ENCODE measurements at regions of chr6 and their contacts with region 1.

Region 1: DNA sequence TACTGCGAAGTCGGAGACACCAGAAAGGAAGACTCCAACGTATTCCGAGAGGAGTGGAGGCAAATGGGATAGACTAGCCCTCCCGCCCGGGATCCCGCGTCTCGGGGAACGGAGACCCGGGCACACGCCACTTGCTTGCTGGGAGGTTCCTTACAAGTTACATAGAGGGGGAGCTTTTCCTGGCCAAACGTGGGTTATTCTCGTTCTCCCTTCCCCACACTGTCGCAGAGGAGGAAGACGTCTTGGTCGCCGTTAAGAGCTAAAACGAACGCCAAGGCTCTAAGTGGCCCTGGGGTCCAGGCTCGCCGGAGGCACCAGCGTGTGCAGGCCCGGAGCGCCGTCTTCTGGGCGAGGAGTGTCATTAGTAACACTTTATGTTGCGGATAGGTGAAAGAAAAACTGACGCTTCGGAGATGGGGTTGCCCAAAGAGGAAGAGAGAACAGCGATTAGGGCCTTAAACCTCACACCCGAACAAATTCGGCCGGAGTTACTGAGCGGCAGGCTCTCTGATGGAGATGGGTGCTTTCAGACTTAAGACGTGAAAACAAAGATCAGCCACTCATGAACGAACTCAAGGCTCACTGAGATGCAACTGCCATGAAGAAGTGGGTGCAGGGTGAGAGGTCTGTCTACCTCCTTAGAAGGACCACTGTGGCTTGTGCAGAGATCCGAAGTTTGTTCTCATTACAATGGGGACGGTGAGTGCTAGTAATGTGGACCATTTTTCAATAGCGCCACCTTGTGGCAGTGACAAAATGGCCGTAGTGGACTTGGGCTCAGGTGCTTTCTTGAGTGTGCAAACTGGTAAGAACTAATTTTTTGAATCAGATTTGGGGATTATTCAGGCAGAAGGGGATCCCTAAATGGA is 11.7 kb upstream of the ZNF311 start:
- DNase-seq: peak; percentile 71 to 80
- ATAC-seq: peak; percentile 78 to 97 (median 82)
- H3K4me3 ChIP-seq: peak overlapping the region; percentile 65
- H3K27ac ChIP-seq: no peak overlapping the region
- H3K4me1 ChIP-seq: no peaks in the 10 kb centered on the region
- H3K27me3 ChIP-seq: peaks cover 0 to 50% (median 15%) of the 10 kb centered on the region in 3 donors
- CTCF ChIP-seq: peak; percentile 80

Region 2: DNA sequence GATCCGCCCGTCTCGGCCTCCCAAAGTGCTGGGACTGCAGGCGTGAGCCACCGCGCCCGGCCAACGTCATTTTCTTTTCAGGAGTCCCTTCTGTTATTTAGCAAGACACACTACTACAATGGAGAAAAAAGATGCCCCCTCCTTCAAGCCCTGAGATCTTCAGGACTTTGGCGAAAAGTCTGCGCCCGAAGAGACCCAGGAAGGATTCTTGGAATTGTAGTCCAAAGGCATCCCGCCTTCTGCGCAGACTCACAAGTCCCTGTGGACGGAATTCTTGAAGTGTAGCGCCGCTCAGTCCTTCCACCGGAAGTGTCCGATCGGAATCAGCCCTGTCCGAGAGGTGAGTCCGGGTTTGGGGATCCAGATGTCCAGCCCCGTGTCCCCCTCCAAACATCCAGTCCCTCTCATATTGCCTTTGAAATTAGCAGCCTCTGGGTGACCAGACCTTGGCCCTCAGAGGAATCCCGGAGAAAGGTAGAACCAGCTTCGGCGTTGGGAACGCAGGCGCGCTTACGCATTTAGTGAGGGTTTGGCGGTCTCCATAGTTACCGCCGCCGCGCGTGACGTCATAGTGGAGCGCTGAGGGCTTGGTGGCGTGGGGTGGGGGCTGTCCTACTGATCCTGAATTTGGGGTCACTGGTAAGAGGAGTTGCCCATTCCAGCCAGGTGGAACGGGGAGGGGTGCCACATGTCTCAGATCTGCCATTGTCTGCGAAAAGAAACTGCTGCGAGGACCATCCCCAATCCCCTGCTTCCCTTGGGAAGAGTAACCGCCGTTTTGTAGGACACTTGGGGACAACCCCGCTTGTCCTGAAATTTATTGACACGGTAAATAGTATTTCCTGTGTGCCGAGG is 935.9 kb before region 1 on chr6:
- intact Hi-C with region 1: no loop called
- DNase-seq: peak; percentile 92 to 96
- ATAC-seq: peak; percentile 98 to 99 (median 99)
- H3K4me3 ChIP-seq: peak overlapping the region; percentile 93
- H3K27ac ChIP-seq: peak overlapping the region; percentile 84
- H3K4me1 ChIP-seq: peaks cover 8% of the 10 kb centered on the region
- H3K27me3 ChIP-seq: no peaks in the 10 kb centered on the region
- CTCF ChIP-seq: no peak

Region 3: GRCh38 chr6:28683944-28684538 is 332.8 kb before region 1 on chr6:
- intact Hi-C with region 1: loop called (anchors 1 to 2 kb)
- DNase-seq: no peak
- ATAC-seq: no peak
- H3K4me3 ChIP-seq: no peak overlapping the region
- H3K27ac ChIP-seq: no peak overlapping the region
- H3K4me1 ChIP-seq: no peaks in the 10 kb centered on the region
- H3K27me3 ChIP-seq: peaks cover 2 to 42% (median 3%) of the 10 kb centered on the region in 3 donors
- CTCF ChIP-seq: peak; percentile 34